Activated T-helper 1 cell treated with anti-CD3 and anti-CD28 coated beads, Interleukin-12 subunit alpha, Interleukin-12 subunit beta, Interleukin-2, Interleukin-4 antibody, amounts not matched to agents 30 ng/mL and 10 ng/mL and 1 ng/mL, durations not matched to agents 14 hours and 24 hours and 36 hours (primary cell): ENCODE measurements at regions of chr3 and their contacts with region 1.

Region 1: GRCh38 chr3:187802928-187803259 is 57.6 kb upstream of the BCL6 start:
- DNase-seq: peak; percentile 78
- H3K4me3 Mint-ChIP-seq: peak overlapping the region; percentile 65
- H3K27ac Mint-ChIP-seq: peak overlapping the region; percentile 90
- H3K4me1 Mint-ChIP-seq: peaks cover 96% of the 10 kb centered on the region
- H3K27me3 Mint-ChIP-seq: no peaks in the 10 kb centered on the region

Region 2: DNA sequence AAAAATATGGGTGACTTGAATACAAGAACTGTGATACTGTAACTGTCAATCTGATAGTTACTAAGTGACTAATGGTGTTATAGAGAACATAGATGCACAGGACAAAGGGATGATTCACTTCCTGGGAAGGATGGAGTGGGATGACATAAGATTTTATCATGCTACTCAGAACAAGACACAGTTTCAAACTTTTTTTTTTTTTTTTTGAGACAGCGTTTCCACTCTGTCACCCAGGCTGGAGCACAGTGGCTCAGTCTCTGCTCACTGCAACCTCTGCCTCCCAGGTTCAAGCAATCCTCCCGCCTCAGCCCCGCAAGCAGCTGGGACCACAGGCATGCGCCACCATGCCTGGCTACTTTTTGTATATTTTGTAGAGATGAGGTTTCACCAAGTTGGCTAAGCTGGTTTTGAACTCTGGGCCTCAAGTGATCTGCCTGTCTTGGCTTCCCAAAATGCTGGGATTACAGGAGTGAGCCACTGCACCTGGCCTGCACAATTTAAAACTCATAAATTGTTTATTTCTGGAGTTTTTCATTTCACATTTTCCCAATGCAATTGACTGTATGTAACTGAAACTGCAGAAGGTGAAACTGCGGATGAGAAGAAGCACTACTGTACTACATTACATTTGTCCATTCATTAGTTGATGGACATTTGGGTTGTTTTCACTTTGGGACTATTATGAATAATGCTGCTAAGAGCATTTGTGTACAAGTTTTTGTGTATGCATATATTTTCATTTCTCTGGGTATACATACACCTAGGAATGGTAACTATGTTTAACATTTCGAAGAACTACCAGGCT is 919.8 kb before region 1 on chr3:
- intact Hi-C with region 1: loop called (anchors 2 kb)
- DNase-seq: peak; percentile 31
- H3K4me3 Mint-ChIP-seq: peak overlapping the region; percentile 54
- H3K27ac Mint-ChIP-seq: peak overlapping the region; percentile 90
- H3K4me1 Mint-ChIP-seq: peaks cover 58% of the 10 kb centered on the region
- H3K27me3 Mint-ChIP-seq: no peaks in the 10 kb centered on the region

Region 3: GRCh38 chr3:187777331-187777941 is 25.5 kb before region 1 on chr3:
- intact Hi-C with region 1: loop called (anchors 1 kb)
- DNase-seq: peak; percentile 40
- H3K4me3 Mint-ChIP-seq: peak overlapping the region; percentile 32
- H3K27ac Mint-ChIP-seq: peak overlapping the region; percentile 91
- H3K4me1 Mint-ChIP-seq: peaks cover 64% of the 10 kb centered on the region
- H3K27me3 Mint-ChIP-seq: no peaks in the 10 kb centered on the region

Region 4: DNA sequence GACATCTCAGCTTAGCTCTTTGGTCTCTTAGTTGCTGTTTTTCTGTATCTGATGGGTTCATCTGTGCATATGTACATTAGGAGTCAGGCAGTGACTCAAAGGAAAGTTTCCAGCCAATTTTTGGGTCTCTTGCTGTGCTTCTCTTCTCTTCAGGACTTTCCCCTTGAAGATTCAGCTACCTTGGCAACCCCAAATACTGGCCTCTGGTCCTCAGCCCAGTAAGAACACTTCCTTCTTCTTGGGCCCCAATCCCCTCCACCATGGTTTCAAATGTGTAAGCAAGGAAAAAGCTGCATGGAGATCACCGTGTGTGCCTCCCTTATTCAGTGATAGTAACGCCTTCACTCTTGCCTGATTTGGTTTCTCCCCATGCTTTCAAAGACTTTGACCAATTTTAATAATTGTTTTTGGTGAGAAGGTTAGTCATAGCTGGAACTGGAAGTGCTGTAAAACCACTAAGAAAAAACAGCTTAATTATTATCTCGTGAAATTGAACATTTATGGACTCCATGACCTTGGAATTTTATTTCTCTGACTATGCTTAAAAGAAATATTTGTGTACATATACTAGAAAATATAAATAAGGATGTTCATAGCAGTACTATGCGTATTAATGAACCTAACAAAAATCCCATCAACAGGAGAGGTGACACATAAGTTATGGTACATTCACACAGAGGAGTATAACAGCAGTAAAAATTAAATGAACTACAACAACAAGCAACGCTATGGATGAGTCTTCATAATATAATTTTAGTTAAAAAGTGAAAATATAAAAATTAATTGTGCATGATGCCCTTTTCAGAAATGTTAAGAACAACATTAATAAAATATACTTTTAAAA is 67.7 kb after region 1 on chr3:
- intact Hi-C with region 1: loop called (anchors 1 kb)
- DNase-seq: no peak
- H3K4me3 Mint-ChIP-seq: peak overlapping the region; percentile 49
- H3K27ac Mint-ChIP-seq: peak overlapping the region; percentile 84
- H3K4me1 Mint-ChIP-seq: peaks cover 32% of the 10 kb centered on the region
- H3K27me3 Mint-ChIP-seq: no peaks in the 10 kb centered on the region

Region 5: GRCh38 chr3:188154014-188154808 is 351.3 kb after region 1 on chr3 and contains the start of gene LPP:
- intact Hi-C with region 1: loop called (anchors 2 kb)
- DNase-seq: peak; percentile 90
- H3K4me3 Mint-ChIP-seq: peak within 1 kb of the TSS; percentile 89
- H3K27ac Mint-ChIP-seq: peak within 1 kb of the TSS; percentile 87
- H3K4me1 Mint-ChIP-seq: peaks cover 71% of the 10 kb centered on the region
- H3K27me3 Mint-ChIP-seq: no peaks in the 10 kb centered on the region
- total RNA-seq, gene LPP: 38.2 and 46.4 TPM in 2 replicates

Region 6: GRCh38 chr3:188584162-188584529 is 781.3 kb after region 1 on chr3:
- intact Hi-C with region 1: loop called (anchors 1 kb)
- DNase-seq: no peak
- H3K4me3 Mint-ChIP-seq: no peak overlapping the region
- H3K27ac Mint-ChIP-seq: no peak overlapping the region
- H3K4me1 Mint-ChIP-seq: no peaks in the 10 kb centered on the region
- H3K27me3 Mint-ChIP-seq: no peaks in the 10 kb centered on the region

Region 7: DNA sequence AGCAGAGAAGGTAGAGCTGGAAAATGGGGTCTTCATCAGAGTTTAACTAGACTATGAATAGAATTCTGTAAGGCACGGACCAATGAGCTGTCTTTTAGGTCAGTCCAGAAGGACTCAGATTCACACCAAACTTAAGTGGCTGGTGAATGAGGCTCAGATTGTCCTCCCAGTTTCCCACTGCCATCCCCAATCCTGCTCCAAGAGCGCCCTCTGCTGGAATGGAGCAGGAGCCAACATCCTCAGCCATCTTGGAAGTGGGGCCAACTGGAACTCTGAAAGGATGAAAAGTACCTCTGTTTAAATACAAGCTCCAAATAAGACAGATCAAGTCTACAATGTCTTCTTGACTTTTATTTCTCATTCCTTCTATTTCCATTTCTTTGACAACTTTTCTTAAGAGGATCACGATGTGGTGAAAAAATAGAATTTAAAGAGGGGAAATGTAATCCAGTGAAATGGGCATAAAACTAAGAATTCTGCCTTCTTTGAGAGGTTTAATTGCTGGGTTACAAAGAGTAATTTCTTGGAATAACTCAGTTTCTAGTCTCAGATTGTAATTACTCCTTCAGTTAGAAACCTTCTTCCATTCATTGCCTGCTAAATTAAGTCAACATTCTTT is 1151.8 kb after region 1 on chr3:
- intact Hi-C with region 1: loop called (anchors 10 kb)
- DNase-seq: peak; percentile 68
- H3K4me3 Mint-ChIP-seq: no peak overlapping the region
- H3K27ac Mint-ChIP-seq: no peak overlapping the region
- H3K4me1 Mint-ChIP-seq: peaks cover 46% of the 10 kb centered on the region
- H3K27me3 Mint-ChIP-seq: no peaks in the 10 kb centered on the region